Activated T-helper 1 cell treated with anti-CD3 and anti-CD28 coated beads, Interleukin-12 subunit alpha, Interleukin-12 subunit beta, Interleukin-2, Interleukin-4 antibody, amounts not matched to agents 30 ng/mL and 10 ng/mL and 1 ng/mL, durations not matched to agents 14 hours and 24 hours and 36 hours (primary cell): ENCODE measurements at regions of chr12 and their contacts with region 1.

Region 1: DNA sequence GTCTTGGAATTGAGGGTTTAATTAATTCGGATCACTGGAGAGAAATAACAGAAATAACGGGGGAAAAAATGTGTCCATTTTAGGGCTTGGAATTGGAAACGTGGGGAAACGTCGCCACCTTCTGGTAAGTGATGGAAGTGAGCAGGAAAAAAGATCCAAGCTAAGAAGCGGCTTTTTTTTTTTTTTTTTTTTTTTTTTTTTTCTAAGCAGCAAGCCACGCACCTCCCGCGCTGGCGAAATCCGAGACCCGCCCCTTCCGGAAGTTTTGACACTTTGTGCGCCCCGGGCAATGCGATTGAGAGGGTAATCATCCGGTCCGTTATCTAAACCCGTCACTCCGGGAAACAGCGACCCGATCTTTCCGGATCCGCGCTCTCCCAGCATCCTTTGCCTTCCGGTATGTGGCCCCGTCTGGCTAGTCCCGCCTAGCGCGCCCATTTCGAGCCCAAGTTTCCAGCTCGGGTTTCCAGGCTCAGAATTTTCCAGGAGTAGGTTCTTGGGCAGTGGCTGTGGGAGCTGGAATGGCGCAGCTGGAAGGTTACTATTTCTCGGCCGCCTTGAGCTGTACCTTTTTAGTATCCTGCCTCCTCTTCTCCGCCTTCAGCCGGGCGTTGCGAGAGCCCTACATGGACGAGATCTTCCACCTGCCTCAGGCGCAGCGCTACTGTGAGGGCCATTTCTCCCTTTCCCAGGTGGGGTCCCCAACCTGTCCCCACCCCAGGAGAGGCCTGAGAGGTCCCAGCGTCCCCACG is at the start of gene ALG10:
- DNase-seq: peak; percentile 95
- H3K4me3 Mint-ChIP-seq: peak within 1 kb of the TSS; percentile 96
- H3K27ac Mint-ChIP-seq: peak within 1 kb of the TSS; percentile 93
- H3K4me1 Mint-ChIP-seq: peaks cover 35% of the 10 kb centered on the region
- H3K27me3 Mint-ChIP-seq: no peaks in the 10 kb centered on the region
- total RNA-seq, gene ALG10: 20.3 and 28.5 TPM in 2 replicates

Region 2: GRCh38 chr12:32139064-32139421 is 1883.2 kb before region 1 on chr12:
- intact Hi-C with region 1: loop called (anchors 10 kb)
- DNase-seq: peak; percentile 20
- H3K4me3 Mint-ChIP-seq: peak overlapping the region; percentile 70
- H3K27ac Mint-ChIP-seq: peak overlapping the region; percentile 4
- H3K4me1 Mint-ChIP-seq: peaks cover 39% of the 10 kb centered on the region
- H3K27me3 Mint-ChIP-seq: peaks cover 11% of the 10 kb centered on the region

Region 3: DNA sequence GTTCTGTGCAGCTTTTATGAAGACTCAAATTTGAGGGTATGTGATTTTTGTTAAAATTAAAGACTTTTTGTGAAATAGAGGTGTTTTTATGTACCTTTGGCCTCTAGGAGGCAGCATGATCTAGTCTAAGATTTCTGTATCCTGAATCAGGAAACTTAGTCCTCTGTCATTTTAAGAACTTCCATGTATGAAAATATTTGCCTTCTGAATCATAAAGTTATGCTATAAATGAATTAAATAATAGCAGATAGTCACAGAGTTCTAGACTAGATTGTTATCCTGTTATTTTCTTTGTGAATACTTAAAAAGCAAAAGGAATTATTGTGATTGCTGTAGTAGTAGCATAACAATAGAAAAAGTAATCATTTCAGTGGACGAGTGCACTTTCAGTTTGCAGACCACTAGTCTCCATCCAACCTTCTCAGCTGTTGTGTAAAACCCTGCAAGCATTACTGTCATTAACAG is 1566.6 kb before region 1 on chr12:
- intact Hi-C with region 1: loop called (anchors 2 kb)
- DNase-seq: no peak
- H3K4me3 Mint-ChIP-seq: no peak overlapping the region
- H3K27ac Mint-ChIP-seq: no peak overlapping the region
- H3K4me1 Mint-ChIP-seq: peaks cover 5% of the 10 kb centered on the region
- H3K27me3 Mint-ChIP-seq: peaks cover 11% of the 10 kb centered on the region

Region 4: DNA sequence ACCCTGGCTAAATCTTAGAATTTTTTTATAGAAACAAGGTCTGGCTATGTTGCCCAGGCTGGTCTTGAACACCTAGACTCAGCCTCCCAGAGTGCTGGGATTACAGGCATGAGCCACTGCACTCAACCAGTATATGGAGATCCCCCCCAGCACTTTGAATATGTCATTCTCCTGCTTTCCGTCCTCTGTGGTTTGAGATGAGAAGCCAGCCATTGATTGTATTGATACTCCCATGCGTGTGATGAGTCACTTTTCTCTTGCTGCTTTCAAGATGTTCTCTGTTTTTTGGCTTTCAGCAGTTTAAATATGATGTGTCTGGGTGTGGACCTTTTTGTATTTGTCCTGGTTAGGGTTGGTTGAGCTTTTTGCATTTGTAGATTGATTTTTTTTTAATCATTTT is 1418.4 kb before region 1 on chr12:
- intact Hi-C with region 1: loop called (anchors 5 kb)
- DNase-seq: peak; percentile 56
- H3K4me3 Mint-ChIP-seq: no peak overlapping the region
- H3K27ac Mint-ChIP-seq: peak overlapping the region; percentile 65
- H3K4me1 Mint-ChIP-seq: peaks cover 18% of the 10 kb centered on the region
- H3K27me3 Mint-ChIP-seq: no peaks in the 10 kb centered on the region

Region 5: GRCh38 chr12:32896432-32897273 is 1125.6 kb before region 1 on chr12 and contains the start of gene PKP2:
- intact Hi-C with region 1: loop called (anchors 10 kb)
- DNase-seq: no peak
- H3K4me3 Mint-ChIP-seq: peak within 1 kb of the TSS; percentile 63
- H3K27ac Mint-ChIP-seq: no peak within 1 kb of the TSS
- H3K4me1 Mint-ChIP-seq: peaks cover 14% of the 10 kb centered on the region
- H3K27me3 Mint-ChIP-seq: peaks cover 43% of the 10 kb centered on the region
- total RNA-seq, gene PKP2: not detected in 2 replicates